Mammary epithelial cell (primary cell): ENCODE measurements at regions of chr9 and their contacts with region 1.

Region 1: DNA sequence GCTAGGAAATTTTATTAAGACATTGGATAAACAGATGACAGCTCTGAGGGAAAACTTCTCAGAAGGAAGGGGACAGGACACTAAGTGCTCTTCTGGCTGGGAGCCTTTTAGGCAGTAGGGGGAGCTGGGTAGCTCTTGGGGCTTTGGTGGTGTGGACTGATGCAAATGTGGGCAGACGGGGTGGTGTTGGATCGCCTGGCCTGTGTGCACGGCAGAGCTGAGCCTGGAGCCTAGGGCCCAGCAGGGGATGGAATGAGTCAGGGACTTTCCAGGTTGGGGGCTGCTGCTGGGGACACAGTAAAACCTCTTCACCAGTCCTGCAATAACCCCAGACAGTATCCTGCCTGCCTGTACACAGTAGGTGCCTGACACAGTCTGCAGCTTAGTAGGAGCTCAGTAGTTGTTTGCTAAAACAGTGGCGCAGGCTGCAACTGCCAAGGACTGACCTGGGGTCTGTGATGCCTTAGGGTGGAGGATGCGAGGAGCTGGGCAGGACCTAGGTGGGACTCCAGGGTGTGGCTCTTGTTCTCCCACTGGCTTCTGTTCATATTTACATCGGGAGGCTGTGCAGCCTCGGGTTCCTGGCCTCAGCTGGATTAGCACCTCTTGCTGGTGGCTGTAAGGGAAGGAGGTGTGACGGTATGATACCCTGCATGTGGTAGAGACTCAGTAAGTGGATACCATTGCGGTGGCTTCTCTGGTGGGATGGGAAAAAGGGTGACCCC is 83.8 kb downstream of the DAB2IP start:
- DNase-seq: peak; percentile 70
- H3K4me3 ChIP-seq: no peak overlapping the region
- H3K27ac ChIP-seq: peak overlapping the region; percentile 68
- H3K4me1 ChIP-seq: peaks cover 69% of the 10 kb centered on the region
- H3K27me3 ChIP-seq: no peaks in the 10 kb centered on the region
- CTCF ChIP-seq: peak; percentile 50 to 73

Region 2: GRCh38 chr9:121598965-121599871 is 136.0 kb before region 1 on chr9:
- CTCF ChIA-PET with region 1: no interaction called
- dilution Hi-C with region 1: no loop called
- in situ Hi-C with region 1: no loop called
- intact Hi-C with region 1: no loop called
- DNase-seq: peak; percentile 32
- H3K4me3 ChIP-seq: peak overlapping the region in 2 of 3 experiments; percentile 49 to 50
- H3K27ac ChIP-seq: no peak overlapping the region
- H3K4me1 ChIP-seq: peaks cover 12% of the 10 kb centered on the region
- H3K27me3 ChIP-seq: peaks cover 23% of the 10 kb centered on the region
- CTCF ChIP-seq: no peak

Region 3: DNA sequence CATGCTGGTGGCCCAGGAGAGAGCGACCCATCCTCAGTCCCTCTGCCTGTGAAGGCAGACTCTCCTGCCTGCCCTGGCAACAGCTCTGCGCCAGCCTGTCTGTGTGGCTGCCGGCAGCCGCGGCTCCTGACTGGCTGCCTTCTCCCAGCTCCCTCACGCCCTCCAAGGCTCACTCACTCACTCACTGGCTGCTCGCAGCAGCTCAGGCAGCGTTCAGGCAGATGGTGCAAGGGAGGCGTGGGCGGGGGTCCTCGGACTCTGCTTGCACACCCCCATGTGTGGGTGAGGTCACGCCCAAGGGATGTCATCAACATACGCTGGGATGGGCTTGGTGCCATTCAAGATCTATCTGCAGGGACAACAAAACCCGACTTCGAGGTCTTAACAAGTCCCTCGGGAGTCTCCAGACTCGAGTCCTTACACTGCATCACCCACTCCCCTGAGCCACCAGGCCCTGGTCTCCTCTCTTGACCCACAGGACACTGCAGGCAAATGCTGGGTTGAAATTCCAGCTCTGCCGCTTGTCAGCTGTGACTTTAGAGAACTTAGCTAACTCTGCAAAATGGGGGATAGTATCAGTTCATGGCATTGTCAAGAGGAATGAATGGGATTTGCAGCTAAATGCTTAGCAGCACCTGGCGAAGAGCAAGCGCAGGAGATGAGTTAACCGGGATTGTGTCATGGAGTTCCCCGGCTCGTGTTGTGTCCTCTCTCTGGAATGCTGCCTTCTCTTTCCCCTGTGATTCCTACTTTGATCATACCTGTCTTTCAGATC is 17.0 kb before region 1 on chr9:
- CTCF ChIA-PET with region 1: no interaction called
- dilution Hi-C with region 1: no loop called
- in situ Hi-C with region 1: no loop called
- intact Hi-C with region 1: loop called (anchors 2 kb)
- DNase-seq: peak; percentile 79
- H3K4me3 ChIP-seq: no peak overlapping the region
- H3K27ac ChIP-seq: peak overlapping the region; percentile 88
- H3K4me1 ChIP-seq: peaks cover 73% of the 10 kb centered on the region
- H3K27me3 ChIP-seq: no peaks in the 10 kb centered on the region
- CTCF ChIP-seq: no peak